Heart left ventricle (tissue), 16 donors: ENCODE measurements at regions of chr20 and their contacts with region 1.

Region 1: GRCh38 chr20:33653218-33653899 is 8.8 kb upstream of the C20orf144 start:
- DNase-seq: peak in 3 of 5 donors; percentile 61 to 67 (median 61)
- ATAC-seq: peak; percentile 45 to 66 (median 58)
- H3K4me3 ChIP-seq: peak overlapping the region in 5 of 12 donors; percentile 3 to 28 (median 23)
- H3K27ac ChIP-seq: peak overlapping the region in 2 of 12 donors; percentile 25 to 29
- H3K4me1 ChIP-seq: peaks cover 0 to 27% (median 12%) of the 10 kb centered on the region in 12 donors
- H3K27me3 ChIP-seq: no peaks in the 10 kb centered on the region
- CTCF ChIP-seq: peak; percentile 46 to 82 (median 74)
- POLR2A ChIP-seq: no peak

Region 2: DNA sequence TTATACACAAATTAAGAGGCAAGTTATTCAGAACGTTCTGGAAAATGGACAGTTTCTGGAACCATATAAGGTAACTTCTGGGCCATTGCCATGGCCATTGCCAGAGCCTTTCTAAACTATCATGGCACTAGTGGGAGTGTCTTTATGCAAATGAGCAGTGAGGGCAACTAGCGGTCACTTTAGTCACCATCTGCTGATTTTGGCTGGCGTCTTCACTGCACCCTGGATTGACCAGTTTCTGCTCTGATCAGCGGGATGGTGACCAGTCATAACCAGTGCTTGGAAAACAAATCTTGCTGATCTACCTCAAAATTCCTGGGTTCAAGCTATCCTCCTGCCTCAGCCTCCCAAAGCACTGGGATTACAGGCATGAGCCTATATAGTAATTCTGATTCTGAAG is 202.5 kb before region 1 on chr20:
- intact Hi-C with region 1: loop called in 6 of 10 experiments (anchors 2 to 5 kb)
- DNase-seq: no peak
- ATAC-seq: no peak
- H3K4me3 ChIP-seq: no peak overlapping the region
- H3K27ac ChIP-seq: no peak overlapping the region
- H3K4me1 ChIP-seq: no peaks in the 10 kb centered on the region
- H3K27me3 ChIP-seq: no peaks in the 10 kb centered on the region
- CTCF ChIP-seq: no peak
- POLR2A ChIP-seq: no peak

Region 3: GRCh38 chr20:33460711-33461110 is 192.6 kb before region 1 on chr20:
- intact Hi-C with region 1: loop called in 9 of 10 experiments (anchors 2 to 5 kb)
- DNase-seq: no peak
- ATAC-seq: no peak
- H3K4me3 ChIP-seq: no peak overlapping the region
- H3K27ac ChIP-seq: no peak overlapping the region
- H3K4me1 ChIP-seq: peaks cover 0 to 16% (median 3%) of the 10 kb centered on the region in 12 donors
- H3K27me3 ChIP-seq: no peaks in the 10 kb centered on the region
- CTCF ChIP-seq: no peak
- POLR2A ChIP-seq: no peak